Right ventricle myocardium superior (tissue), 1 donor: ENCODE measurements at regions of chr19 and their contacts with region 1.

Region 1: DNA sequence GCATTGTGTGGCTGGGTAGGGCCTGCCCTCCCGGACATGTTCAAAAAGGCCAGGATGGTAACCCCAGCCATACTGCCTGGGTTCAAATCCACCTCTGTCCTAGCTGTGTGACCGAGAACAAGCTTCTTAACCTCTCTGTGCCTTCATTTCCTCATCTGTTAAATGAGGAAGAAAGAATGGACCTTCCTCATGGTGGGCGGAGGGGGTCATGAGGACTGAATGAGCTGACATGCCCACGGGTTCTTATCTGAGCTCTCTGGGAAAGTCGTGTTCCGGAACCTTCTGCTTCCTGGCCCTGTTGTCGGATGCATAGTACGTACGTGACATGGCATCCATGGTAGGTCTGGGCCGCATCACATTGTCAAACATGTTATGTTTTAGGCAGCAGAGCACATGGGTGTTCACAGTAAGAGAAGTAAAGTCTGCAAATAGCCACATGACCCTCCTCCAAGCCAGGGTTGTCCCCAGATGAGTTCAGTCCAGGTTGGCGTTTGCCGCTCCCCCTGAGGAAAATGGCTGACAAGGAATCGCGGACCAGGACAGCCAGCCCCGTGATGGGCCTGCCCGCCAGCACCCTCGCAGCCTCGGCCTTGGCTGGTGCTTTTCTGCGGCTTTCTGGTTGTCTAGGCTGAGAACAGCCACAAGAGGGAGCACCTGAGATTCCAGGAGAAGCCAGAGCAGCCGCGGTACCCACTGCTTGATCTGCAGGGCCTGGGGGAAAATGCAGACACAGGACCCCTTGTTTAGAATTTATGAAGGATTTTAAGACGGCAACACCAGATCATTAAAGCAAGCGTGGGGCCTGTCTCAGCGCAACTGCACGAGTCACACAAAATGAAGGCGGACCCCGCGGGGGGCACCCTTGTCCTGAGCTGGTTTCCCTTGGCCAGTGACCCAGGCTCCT is 2.4 kb upstream of the NTN5 start:
- DNase-seq: peak; percentile 82
- ATAC-seq: peak; percentile 88

Region 2: DNA sequence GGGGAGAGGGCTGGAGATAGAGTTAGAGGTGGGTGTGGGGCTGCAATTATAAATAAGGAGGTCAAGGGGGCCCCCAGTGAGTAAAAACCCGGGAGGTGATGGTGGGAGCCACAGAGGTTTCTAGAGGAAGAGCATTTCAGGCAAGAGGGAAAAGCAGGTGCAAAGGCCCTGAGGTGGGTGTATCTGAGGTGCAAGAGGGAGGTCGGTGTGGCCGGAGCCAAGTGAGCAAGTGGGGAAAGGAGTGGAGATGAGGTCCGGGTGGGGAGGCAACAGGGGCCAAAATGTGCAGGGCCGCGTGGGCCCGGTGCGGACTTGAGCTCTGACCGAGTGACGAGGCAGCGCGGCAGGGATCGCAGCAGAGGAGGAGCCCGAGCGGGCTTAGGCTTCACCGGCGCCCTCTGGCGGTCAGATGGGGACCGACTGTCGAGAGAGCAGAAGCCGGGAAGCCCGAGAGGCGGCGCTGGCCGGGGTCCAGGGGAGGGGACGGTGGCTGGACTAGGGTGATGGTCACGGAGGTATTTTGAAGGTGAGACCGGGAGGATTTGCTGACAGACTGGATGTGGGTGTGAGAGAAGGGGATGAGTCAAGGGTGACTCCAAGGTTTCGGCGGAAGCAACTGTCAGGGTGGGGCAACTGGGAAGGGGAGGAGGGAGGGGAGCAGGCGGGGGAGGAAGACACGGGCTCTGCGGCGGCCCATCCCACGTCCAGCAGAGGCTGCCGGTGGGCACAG is 86.3 kb before region 1 on chr19:
- intact Hi-C with region 1: no loop called
- DNase-seq: peak; percentile 97
- ATAC-seq: peak; percentile 92

Region 3: DNA sequence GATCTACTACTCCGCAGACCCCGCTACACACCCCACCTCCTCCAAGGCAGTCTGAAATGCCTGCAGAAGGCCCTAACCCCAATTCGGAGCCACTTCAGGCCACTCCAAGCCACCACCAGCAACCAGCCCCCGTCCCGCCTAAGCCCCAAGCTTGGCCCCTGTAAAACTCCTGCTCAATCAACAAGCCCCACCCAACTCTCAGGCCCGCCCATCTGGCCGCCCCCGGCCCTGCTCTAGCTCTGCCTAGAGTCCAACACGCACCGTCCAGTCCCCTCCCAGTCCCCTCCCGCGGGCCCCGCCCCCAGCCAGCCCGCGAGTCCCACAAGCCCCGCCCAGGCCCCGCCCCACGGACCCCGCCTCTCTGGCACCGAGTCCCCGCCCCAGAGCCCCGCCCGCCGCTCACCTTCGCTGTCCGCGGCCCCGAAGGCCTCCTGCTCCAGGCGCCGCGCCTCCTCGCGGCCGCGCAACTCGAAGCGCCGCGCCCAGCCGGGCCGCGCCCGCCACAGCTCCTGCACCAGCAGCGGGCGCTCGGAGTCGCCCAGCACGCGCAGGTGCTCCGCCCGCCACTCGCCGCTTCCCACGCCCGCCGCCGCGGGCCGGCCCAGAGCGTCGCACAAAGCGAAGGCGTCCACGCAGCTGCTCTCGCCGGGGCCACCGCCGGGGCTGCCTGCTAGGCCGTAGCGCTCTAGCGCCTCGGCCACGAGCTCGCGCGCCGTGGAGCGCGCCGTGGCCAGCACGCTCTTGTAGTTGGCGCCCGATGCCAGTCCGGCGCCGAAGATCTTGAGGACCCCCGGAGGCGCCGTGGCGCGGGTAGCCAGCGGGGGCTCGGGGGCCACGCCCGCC is 63.6 kb after region 1 on chr19:
- intact Hi-C with region 1: loop called (anchors 5 kb)
- DNase-seq: peak; percentile 94
- ATAC-seq: peak; percentile 91

Region 4: GRCh38 chr19:48780631-48781391 is 105.6 kb after region 1 on chr19:
- intact Hi-C with region 1: loop called (anchors 10 kb)
- DNase-seq: no peak
- ATAC-seq: no peak